ENCODE measurements at regions of chr19 and their contacts with region 1.

Region 1: GRCh38 chr19:49391581-49392399 is 3.7 kb downstream of the KASH5 start:
- DNase-seq: peak; percentile 78 to 81 (median 79)
- ATAC-seq: peak; percentile 86 to 92 (median 89)
- H3K4me3 ChIP-seq: no peak overlapping the region
- H3K27ac ChIP-seq: no peak overlapping the region
- H3K4me1 ChIP-seq: no peaks in the 10 kb centered on the region
- H3K27me3 ChIP-seq: peaks cover 0 to 5% of the 10 kb centered on the region in 2 donors
- CTCF ChIP-seq: peak; percentile 79 to 83 (median 81)
- POLR2A ChIP-seq: no peak

Region 2: DNA sequence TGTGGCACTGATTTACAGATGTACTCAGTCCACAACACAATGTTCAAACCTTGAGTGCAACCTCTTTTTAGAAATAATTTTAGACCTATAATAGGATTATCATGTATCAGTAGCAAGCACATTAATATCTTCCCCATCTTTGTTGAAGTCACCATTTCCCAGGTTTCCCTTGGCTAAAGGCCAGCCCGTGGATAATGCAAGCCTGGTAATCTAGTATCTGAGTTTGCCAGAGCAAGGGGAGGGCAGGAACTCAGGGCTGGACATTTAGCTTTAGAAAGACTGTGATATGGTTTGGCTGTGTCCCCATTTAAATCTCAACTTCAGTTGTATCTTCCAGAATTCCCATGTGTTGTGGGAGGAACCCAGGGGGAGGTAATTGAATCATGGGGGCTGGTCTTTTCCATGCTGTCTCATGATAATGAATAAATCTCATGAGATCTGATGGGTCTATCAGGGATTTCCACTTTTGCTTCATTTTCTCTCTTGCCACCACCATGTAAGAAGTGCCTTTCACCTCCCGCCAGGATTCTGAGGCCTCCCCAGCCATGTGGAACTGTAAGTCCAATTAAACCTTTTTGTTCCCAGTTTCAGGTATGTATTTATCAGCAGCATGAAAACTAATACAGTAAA is 104.5 kb before region 1 on chr19:
- intact Hi-C with region 1: no loop called
- DNase-seq: no peak
- ATAC-seq: no peak
- H3K4me3 ChIP-seq: no peak overlapping the region
- H3K27ac ChIP-seq: no peak overlapping the region
- H3K4me1 ChIP-seq: no peaks in the 10 kb centered on the region
- H3K27me3 ChIP-seq: no peaks in the 10 kb centered on the region
- CTCF ChIP-seq: no peak
- POLR2A ChIP-seq: no peak

Region 3: DNA sequence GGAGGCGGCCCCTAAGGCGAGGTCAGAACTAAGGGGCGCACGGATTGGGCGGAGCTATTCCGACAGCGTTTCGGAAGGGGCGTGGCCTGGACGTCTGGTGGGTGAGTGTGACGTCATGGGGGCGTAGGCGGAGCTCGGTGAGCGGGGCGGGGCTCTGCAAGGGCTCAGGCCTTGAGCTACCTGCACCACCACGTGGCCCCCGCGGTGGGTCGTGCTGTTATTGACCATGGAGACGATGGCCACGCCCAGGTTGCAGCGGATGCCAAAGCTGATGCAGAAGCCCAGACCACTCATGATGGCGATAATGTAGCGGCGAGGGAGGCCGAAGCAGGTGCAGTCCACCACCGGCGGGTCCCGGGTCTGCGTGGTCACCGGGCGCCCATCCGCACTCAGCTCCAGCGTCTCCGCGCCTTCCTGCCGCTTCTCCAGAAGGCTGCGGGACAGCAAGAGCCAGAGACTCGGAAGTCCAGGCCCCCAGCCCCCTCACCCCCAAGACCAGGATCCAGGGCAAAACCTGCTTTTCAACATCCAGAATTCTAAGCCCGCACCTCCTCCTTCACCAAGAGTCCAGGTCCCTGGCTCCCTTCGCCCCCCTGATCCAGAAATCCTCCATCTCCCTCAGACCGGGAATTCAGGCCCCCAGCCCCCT is 44.7 kb after region 1 on chr19:
- intact Hi-C with region 1: loop called in 1 of 2 experiments (anchors 5 kb)
- DNase-seq: no peak
- ATAC-seq: no peak
- H3K4me3 ChIP-seq: no peak overlapping the region
- H3K27ac ChIP-seq: no peak overlapping the region
- H3K4me1 ChIP-seq: no peaks in the 10 kb centered on the region
- H3K27me3 ChIP-seq: peaks cover 7 to 20% of the 10 kb centered on the region in 2 donors
- CTCF ChIP-seq: no peak
- POLR2A ChIP-seq: no peak

Region 4: DNA sequence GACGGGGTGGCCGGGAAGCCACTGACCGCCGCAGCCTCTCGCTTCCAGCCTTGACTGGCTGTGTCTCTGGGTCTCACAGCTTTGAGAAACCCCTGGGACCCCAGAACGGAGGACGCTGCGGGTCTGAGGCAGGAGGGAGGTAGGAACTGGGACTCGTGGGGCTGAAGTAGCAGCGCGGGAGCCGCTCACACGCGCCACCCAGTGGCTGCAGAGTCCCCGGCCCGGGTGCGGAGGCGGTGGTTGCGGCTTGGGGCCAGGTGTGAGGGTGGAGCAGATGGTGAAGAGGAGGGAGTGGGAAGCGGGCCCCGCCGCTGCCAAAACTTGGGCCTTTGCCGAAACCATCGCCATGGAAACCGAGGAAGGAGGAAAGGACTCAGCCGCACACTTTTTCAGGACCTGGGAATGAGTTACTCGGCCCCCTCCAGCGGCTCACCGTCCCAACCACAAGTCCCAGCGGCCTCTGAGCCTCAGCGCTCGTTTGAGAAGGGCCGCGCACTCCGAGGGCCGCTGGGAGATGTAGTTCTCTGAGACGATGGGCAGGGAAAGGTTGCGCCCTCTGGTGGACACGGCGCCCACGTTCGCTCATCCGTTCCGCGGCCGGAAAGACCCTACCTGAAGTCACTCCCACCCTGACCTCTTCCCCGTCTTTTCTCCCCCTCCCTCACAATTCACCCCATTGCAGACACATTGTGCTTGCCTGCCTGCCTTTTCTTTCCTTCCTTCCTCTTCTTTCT is 51.7 kb after region 1 on chr19:
- intact Hi-C with region 1: loop called (anchors 2 to 5 kb)
- DNase-seq: peak; percentile 94
- ATAC-seq: peak; percentile 79 to 93 (median 88)
- H3K4me3 ChIP-seq: peak overlapping the region; percentile 70 to 80 (median 76)
- H3K27ac ChIP-seq: peak overlapping the region; percentile 2 to 40 (median 35)
- H3K4me1 ChIP-seq: no peaks in the 10 kb centered on the region
- H3K27me3 ChIP-seq: no peaks in the 10 kb centered on the region
- CTCF ChIP-seq: peak; percentile 73 to 83 (median 77)
- POLR2A ChIP-seq: peak; percentile 13

Measured in right lobe of liver (tissue), 6 donors.